CD4-positive, alpha-beta T cell (primary cell): ENCODE measurements at regions of chr10 and their contacts with region 1.

Region 1: DNA sequence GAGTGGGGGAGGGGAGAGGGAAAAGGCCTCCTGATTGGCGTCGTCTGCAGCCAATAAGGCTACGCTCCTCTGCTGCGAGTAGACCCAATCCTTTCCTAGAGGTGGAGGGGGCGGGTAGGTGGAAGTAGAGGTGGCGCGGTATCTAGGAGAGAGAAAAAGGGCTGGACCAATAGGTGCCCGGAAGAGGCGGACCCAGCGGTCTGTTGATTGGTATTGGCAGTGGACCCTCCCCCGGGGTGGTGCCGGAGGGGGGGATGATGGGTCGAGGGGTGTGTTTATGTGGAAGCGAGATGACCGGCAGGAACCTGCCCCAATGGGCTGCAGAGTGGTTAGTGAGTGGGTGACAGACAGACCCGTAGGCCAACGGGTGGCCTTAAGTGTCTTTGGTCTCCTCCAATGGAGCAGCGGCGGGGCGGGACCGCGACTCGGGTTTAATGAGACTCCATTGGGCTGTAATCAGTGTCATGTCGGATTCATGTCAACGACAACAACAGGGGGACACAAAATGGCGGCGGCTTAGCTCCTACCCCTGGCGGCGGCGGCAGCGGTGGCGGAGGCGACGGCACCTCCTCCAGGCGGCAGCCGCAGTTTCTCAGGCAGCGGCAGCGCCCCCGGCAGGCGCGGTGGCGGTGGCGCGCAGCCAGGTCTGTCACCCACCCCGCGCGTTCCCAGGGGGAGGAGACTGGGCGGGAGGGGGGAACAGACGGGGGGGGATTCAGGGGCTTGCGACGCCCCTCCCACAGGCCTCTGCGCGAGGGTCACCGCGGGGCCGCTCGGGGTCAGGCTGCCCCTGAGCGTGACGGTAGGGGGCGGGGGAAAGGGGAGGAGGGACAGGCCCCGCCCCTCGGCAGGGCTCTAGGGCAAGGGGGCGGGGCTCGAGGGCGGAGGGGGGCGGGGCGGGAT is at the start of gene KAT6B:
- DNase-seq: peak; percentile 98 to 100 (median 100)
- ATAC-seq: peak; percentile 78
- H3K4me3 ChIP-seq: peak within 1 kb of the TSS; percentile 85
- H3K4me3 Mint-ChIP-seq: peak within 1 kb of the TSS; percentile 94
- H3K27ac ChIP-seq: peak within 1 kb of the TSS; percentile 88 to 97
- H3K27ac Mint-ChIP-seq: peak within 1 kb of the TSS; percentile 90
- H3K4me1 ChIP-seq: peaks cover 40% of the 10 kb centered on the region
- H3K4me1 Mint-ChIP-seq: peaks cover 68% of the 10 kb centered on the region
- H3K27me3 ChIP-seq: no peaks in the 10 kb centered on the region
- H3K27me3 Mint-ChIP-seq: no peaks in the 10 kb centered on the region
- CTCF ChIP-seq: peak; percentile 32
- total RNA-seq, gene KAT6B: 70.3 to 74.2 TPM

Region 2: GRCh38 chr10:73810735-73811465 is 1015.5 kb before region 1 on chr10:
- CTCF ChIA-PET with region 1: no interaction called
- POLR2A ChIA-PET with region 1: no interaction called
- intact Hi-C with region 1: loop called in 1 of 2 experiments (anchors 5 kb)
- DNase-seq: peak in 13 of 14 experiments; percentile 40 to 80 (median 65)
- ATAC-seq: peak; percentile 17
- H3K4me3 ChIP-seq: peak overlapping the region; percentile 70
- H3K4me3 Mint-ChIP-seq: peak overlapping the region; percentile 97
- H3K27ac ChIP-seq: peak overlapping the region; percentile 55 to 91
- H3K27ac Mint-ChIP-seq: peak overlapping the region; percentile 99
- H3K4me1 ChIP-seq: peaks cover 53% of the 10 kb centered on the region
- H3K4me1 Mint-ChIP-seq: peaks cover 52% of the 10 kb centered on the region
- H3K27me3 ChIP-seq: no peaks in the 10 kb centered on the region
- H3K27me3 Mint-ChIP-seq: no peaks in the 10 kb centered on the region
- CTCF ChIP-seq: no peak

Region 3: GRCh38 chr10:74262856-74263255 is 563.5 kb before region 1 on chr10:
- CTCF ChIA-PET with region 1: no interaction called
- POLR2A ChIA-PET with region 1: no interaction called
- intact Hi-C with region 1: loop called (anchors 5 to 10 kb)
- DNase-seq: no peak
- ATAC-seq: no peak
- H3K4me3 ChIP-seq: no peak overlapping the region
- H3K4me3 Mint-ChIP-seq: no peak overlapping the region
- H3K27ac ChIP-seq: no peak overlapping the region
- H3K27ac Mint-ChIP-seq: no peak overlapping the region
- H3K4me1 ChIP-seq: peaks cover 4% of the 10 kb centered on the region
- H3K4me1 Mint-ChIP-seq: peaks cover 6% of the 10 kb centered on the region
- H3K27me3 ChIP-seq: no peaks in the 10 kb centered on the region
- H3K27me3 Mint-ChIP-seq: no peaks in the 10 kb centered on the region
- CTCF ChIP-seq: no peak

Region 4: DNA sequence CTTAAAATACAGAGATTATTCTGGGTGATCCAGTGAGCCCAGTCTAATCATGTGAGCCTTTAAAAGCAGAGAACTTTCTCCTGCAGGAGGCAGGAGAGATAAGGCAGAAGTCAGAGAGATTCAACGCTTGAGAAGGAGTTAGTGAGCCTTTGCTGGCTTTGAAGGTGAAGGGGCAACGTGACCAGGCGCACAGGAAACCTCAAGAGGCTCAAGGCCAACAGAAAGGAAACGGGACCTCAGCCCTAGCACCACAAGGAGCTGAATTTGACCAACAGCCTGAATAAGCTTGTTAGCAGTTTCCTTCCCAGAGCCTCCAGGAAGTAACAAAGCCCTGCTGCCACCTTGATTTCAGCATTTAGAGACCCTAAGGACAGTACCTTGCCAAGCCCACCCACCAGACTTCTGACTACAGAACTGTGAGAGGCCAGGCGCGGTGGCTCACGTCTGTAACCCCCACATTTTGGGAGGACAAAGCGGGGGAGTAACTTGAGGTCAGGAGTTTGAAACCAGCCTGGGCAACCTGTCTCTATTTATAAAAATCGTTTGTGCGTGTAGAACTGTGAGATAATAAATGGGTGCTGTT is 87.3 kb before region 1 on chr10:
- CTCF ChIA-PET with region 1: no interaction called
- POLR2A ChIA-PET with region 1: interaction called, 3 read pairs
- intact Hi-C with region 1: loop called in 1 of 2 experiments (anchors 5 kb)
- DNase-seq: peak in 5 of 14 experiments; percentile 4 to 63 (median 55)
- ATAC-seq: peak; percentile 74
- H3K4me3 ChIP-seq: no peak overlapping the region
- H3K4me3 Mint-ChIP-seq: no peak overlapping the region
- H3K27ac ChIP-seq: no peak overlapping the region
- H3K27ac Mint-ChIP-seq: peak overlapping the region; percentile 73
- H3K4me1 ChIP-seq: peaks cover 17% of the 10 kb centered on the region
- H3K4me1 Mint-ChIP-seq: peaks cover 24% of the 10 kb centered on the region
- H3K27me3 ChIP-seq: no peaks in the 10 kb centered on the region
- H3K27me3 Mint-ChIP-seq: no peaks in the 10 kb centered on the region
- CTCF ChIP-seq: no peak

Region 5: GRCh38 chr10:75019370-75019769 is 193.0 kb after region 1 on chr10:
- CTCF ChIA-PET with region 1: no interaction called
- POLR2A ChIA-PET with region 1: no interaction called
- intact Hi-C with region 1: loop called (anchors 5 to 10 kb)
- DNase-seq: peak in 3 of 14 experiments; percentile 58 to 62 (median 61)
- ATAC-seq: peak; percentile 66
- H3K4me3 ChIP-seq: no peak overlapping the region
- H3K4me3 Mint-ChIP-seq: no peak overlapping the region
- H3K27ac ChIP-seq: no peak overlapping the region
- H3K27ac Mint-ChIP-seq: peak overlapping the region; percentile 68
- H3K4me1 ChIP-seq: peaks cover 22% of the 10 kb centered on the region
- H3K4me1 Mint-ChIP-seq: peaks cover 35% of the 10 kb centered on the region
- H3K27me3 ChIP-seq: no peaks in the 10 kb centered on the region
- H3K27me3 Mint-ChIP-seq: no peaks in the 10 kb centered on the region
- CTCF ChIP-seq: peak; percentile 63

Region 6: GRCh38 chr10:75235375-75236177 is 409.2 kb after region 1 on chr10 and contains the start of gene COMTD1:
- CTCF ChIA-PET with region 1: no interaction called
- POLR2A ChIA-PET with region 1: interaction called, 7 read pairs
- intact Hi-C with region 1: loop called (anchors 2 to 5 kb)
- DNase-seq: peak; percentile 87 to 96 (median 92)
- ATAC-seq: peak; percentile 64
- H3K4me3 ChIP-seq: peak within 1 kb of the TSS; percentile 80
- H3K4me3 Mint-ChIP-seq: peak within 1 kb of the TSS; percentile 88
- H3K27ac ChIP-seq: peak within 1 kb of the TSS; percentile 47 to 66
- H3K27ac Mint-ChIP-seq: peak within 1 kb of the TSS; percentile 90
- H3K4me1 ChIP-seq: peaks cover 28% of the 10 kb centered on the region
- H3K4me1 Mint-ChIP-seq: peaks cover 29% of the 10 kb centered on the region
- H3K27me3 ChIP-seq: no peaks in the 10 kb centered on the region
- H3K27me3 Mint-ChIP-seq: no peaks in the 10 kb centered on the region
- CTCF ChIP-seq: peak; percentile 100
- total RNA-seq, gene COMTD1: 9.5 to 10.5 TPM